OCI-LY7 (cell line): ENCODE measurements at regions of chr20 and their contacts with region 1.

Region 1: DNA sequence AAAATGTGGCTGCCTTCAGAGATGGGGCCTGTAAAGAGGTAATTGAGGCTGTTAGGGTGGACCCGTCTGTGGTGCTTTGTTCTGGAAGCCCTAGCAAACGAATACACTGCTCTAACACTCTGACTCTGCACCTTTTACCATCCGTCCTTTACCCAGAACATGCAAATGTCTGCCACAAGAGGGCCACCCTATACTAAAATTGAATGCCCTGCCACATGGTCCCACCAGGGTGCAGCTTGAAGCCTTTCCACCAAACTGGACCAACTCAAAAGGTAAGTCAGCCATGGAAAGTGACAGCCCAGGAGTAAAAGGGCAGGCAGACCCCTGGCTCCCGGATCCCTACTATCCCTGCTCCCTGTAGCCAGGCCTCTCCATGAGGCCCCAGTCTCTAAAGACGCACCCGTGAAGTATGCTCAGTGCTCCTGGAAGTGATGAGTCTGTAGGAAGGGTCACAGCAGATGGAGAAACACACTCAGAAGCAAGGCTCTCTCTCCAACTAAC is 5.8 kb upstream of the BFSP1 start:
- DNase-seq: peak; percentile 78
- H3K4me3 ChIP-seq: no peak overlapping the region
- H3K27ac ChIP-seq: no peak overlapping the region
- H3K4me1 ChIP-seq: peaks cover 6% of the 10 kb centered on the region
- CTCF ChIP-seq: peak; percentile 90

Region 2: DNA sequence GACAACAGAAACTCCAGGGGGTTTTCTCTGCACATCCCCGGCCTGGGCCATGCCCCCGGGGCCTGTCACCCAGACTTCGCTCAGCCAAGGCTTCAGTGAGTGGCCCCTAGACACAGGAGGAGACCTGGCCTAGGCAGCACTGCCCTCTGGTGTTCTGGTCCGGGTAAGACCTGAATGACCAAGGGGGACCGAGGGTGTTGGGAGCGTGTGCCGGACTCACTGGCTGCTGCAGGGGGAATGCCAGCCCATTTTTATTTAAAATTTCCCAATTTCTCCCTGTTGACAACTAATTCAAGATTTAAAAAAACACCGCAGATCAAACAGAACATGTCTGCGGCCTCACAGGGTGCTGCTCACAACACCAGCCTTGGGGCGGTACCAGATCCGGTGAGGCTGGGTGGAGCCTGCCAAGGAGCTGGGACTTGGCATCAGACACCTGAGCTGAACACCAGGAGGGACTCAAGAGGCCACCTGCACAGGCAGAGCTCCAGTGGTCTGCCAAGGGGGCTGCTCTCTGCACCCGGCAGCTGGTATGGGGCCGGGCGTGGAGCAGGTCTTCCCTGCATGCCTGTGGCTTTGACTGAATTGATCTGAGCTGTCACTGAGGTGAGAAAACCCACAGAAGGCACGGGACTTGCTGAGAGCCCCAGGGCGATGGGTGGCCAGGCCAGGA is 80.7 kb after region 1 on chr20:
- CTCF ChIA-PET with region 1: no interaction called
- POLR2A ChIA-PET with region 1: no interaction called
- intact Hi-C with region 1: loop called (anchors 1 kb)
- DNase-seq: peak; percentile 48
- H3K4me3 ChIP-seq: no peak overlapping the region
- H3K27ac ChIP-seq: no peak overlapping the region
- H3K4me1 ChIP-seq: no peaks in the 10 kb centered on the region
- CTCF ChIP-seq: peak; percentile 75